ENCODE measurements at regions of chr1 and their contacts with region 1.

Region 1: DNA sequence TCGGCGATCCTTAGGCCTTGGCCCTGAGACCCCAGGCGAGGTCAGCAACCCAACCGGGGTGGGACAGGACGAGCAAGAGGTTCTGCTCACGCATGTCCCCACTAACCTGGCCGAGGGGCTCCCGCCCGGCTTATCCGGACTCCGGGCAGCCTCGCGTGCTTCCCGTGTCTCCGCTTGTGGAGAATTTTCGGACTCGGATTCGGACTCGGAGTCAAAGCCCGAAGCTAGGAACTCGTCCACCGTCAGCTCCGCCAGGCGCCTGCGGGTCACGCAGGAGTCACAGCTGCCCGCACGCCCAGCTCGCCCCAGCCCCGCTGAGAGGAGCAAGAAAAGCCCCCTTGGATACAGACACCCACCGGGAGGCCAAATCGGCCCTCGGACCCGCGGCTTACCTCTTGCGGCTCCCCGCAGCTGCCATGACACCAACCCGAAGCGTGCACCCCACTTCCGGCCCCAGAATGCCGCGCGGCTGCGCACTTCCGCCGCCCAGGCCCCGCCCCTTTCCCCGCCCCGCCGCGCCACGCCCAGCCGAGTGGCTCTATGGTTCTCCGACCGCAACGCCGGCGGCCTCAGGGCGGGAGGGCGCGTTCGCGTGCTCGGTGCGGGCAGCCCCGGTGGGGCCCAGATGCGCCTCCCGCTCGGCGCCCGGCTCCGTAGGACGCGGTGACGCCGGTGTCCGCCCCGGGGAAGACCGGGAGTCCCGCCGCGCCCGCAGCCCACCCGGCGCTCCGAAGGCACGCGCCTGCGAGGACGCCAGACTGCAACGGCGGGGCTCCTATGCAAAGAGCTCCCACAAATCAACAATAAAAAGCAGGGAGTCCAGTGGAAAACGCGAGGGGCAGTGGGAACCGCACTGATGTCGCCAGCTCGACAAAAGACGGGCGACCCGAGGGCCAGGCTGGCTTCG is at the start of gene NOC2L:
- DNase-seq: peak; percentile 79
- ATAC-seq: peak; percentile 89
- H3K4me3 ChIP-seq: peak within 1 kb of the TSS; percentile 98
- H3K27ac ChIP-seq: peak within 1 kb of the TSS; percentile 87
- H3K4me1 ChIP-seq: peaks cover 10% of the 10 kb centered on the region
- H3K27me3 ChIP-seq: no peaks in the 10 kb centered on the region
- CTCF ChIP-seq: no peak
- POLR2A ChIP-seq: peak; percentile 57; the same call in 1 of the 2 replicates
- RAD21 ChIP-seq: no peak
- total RNA-seq, gene NOC2L: 105 and 106 TPM in 2 replicates

Region 2: DNA sequence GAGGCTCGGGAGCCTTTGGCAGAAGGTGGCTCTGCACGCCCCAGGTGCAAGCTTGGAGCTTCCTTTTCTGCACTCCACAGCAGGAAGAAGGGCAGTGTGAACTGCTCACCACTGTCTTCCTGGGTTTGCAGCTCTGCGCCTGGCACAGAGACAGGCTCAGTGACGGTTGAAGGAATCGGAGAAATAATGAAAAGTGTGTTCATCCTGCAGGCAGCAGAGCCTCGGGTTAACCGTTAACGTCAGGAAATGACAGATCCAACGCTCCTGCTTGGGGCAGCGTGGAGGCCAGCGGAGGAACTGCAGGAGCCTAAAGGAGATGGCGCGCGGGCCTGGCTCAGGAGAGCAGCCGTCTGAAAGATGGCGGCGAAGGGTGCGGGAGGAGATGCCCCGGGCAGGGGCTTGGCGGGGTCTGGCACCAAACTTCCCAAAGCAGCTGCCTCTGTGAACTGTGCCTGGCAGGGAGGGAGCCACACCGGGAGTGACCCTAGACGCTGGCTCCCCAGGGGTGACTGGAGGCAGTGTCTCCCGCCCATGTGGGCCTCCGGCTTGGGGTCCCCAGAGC is 46.3 kb before region 1 on chr1:
- CTCF ChIA-PET with region 1: no interaction called
- POLR2A ChIA-PET with region 1: no interaction called
- dilution Hi-C with region 1: no loop called
- in situ Hi-C with region 1: loop called (anchors 5 kb)
- intact Hi-C with region 1: no loop called
- DNase-seq: no peak
- ATAC-seq: no peak
- H3K4me3 ChIP-seq: no peak overlapping the region
- H3K27ac ChIP-seq: no peak overlapping the region
- H3K4me1 ChIP-seq: peaks cover 22% of the 10 kb centered on the region
- H3K27me3 ChIP-seq: no peaks in the 10 kb centered on the region; the same call in 1 of the 2 replicates
- CTCF ChIP-seq: no peak
- POLR2A ChIP-seq: no peak
- RAD21 ChIP-seq: no peak

Region 3: DNA sequence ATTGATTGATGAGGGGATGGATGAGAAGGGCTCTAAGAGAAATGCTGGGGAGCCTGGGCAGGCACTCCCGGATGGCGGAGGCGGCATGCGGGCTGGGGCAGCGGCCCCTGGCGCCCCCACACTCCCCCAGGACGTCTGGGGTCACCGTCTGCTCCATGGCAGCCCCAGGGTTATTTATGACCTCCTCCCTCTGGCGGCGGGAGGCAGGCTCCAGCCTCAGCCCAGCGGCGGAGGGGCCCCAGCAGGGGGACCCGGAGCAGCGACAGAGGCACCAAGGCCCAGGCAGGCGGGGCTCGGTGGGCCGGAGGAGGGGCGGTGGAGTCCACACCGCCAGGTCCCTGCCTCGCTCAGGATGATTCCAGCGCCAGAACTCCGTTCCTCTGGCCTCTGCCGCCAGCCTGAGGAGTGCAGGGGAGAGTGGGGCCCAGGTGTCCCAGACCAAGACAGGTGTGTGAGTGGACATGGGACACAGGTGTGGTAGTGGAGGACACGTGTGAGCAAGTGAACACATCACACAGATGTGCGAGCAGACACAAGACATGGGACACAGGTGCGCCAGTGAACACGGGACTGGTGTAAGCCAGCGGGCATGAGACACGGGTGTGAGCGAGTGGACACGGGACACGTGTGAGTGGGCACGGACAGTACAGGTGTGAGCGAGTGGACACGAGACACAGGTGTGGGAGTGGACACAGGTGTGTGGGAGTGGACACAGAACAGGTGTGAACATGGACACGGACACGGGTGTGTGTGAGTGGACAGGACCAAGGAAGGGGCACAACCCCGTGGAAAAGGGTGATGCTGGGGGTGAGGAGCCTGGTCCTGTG is 37.9 kb before region 1 on chr1:
- CTCF ChIA-PET with region 1: no interaction called
- POLR2A ChIA-PET with region 1: no interaction called
- dilution Hi-C with region 1: no loop called
- in situ Hi-C with region 1: no loop called
- intact Hi-C with region 1: loop called (anchors 5 kb)
- DNase-seq: peak; percentile 71
- ATAC-seq: peak; percentile 64
- H3K4me3 ChIP-seq: no peak overlapping the region
- H3K27ac ChIP-seq: no peak overlapping the region; the same call in 1 of the 2 replicates
- H3K4me1 ChIP-seq: peaks cover 23% of the 10 kb centered on the region
- H3K27me3 ChIP-seq: no peaks in the 10 kb centered on the region; the same call in 1 of the 2 replicates
- CTCF ChIP-seq: peak; percentile 51
- POLR2A ChIP-seq: no peak
- RAD21 ChIP-seq: peak; percentile 36; the same call in 1 of the 2 replicates

Region 4: GRCh38 chr1:1435106-1435903 is 476.2 kb after region 1 on chr1 and contains the start of gene VWA1:
- CTCF ChIA-PET with region 1: no interaction called
- POLR2A ChIA-PET with region 1: no interaction called
- dilution Hi-C with region 1: no loop called
- in situ Hi-C with region 1: no loop called
- intact Hi-C with region 1: no loop called
- DNase-seq: peak; percentile 58
- ATAC-seq: peak; percentile 95
- H3K4me3 ChIP-seq: peak within 1 kb of the TSS; percentile 57
- H3K27ac ChIP-seq: no peak within 1 kb of the TSS
- H3K4me1 ChIP-seq: peaks cover 21% of the 10 kb centered on the region
- H3K27me3 ChIP-seq: no peaks in the 10 kb centered on the region; the same call in 1 of the 2 replicates
- CTCF ChIP-seq: no peak
- POLR2A ChIP-seq: no peak
- RAD21 ChIP-seq: no peak
- total RNA-seq, gene VWA1: 0.83 and 1.1 TPM in 2 replicates